CD8-positive, alpha-beta T cell (primary cell): ENCODE measurements at regions of chr19 and their contacts with region 1.

Region 1: DNA sequence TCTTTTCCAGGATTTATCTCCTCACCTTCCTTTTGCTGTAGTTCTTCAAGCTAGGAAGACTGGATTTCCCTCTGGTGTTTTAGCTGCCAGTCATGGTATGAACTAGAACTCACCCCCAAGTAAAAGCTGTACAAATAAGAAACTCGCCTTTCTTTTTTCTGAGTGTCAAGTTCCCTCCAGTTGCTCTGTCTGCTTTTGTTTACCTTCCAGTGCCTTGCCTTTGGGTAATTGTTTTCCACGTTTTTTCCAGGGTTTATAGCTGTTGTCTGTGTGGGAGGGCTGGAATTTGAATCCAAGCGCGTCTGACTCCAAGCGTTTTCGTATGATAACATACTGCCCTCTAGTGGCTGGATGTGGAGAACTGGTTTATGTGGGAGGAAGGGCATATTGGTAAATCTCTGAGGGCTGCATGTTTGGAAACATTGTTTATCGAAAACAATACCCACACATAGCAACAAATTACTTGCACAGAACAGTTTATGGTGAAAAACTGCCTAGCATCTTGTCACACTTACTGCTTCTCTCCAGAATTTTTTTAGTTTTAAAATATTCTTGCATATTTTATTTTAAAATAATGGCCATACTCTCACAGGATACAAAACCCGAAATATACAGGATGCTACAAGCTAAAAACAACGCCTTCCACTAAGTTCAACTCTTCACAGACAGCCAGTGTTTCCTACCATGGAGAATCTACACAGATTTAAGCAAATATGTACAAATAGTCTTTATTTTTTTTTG is 19.2 kb downstream of the RCN3 start:
- DNase-seq: peak in 7 of 9 experiments; percentile 51 to 89 (median 70)
- ATAC-seq: peak; percentile 78
- H3K4me3 ChIP-seq: peak overlapping the region; percentile 3 to 41
- H3K4me3 Mint-ChIP-seq: peak overlapping the region; percentile 79
- H3K27ac ChIP-seq: no peak overlapping the region
- H3K27ac Mint-ChIP-seq: peak overlapping the region; percentile 82
- H3K4me1 ChIP-seq: peaks cover 49% of the 10 kb centered on the region
- H3K4me1 Mint-ChIP-seq: peaks cover 40% of the 10 kb centered on the region
- H3K27me3 ChIP-seq: no peaks in the 10 kb centered on the region
- H3K27me3 Mint-ChIP-seq: no peaks in the 10 kb centered on the region
- CTCF ChIP-seq: peak; percentile 89

Region 2: DNA sequence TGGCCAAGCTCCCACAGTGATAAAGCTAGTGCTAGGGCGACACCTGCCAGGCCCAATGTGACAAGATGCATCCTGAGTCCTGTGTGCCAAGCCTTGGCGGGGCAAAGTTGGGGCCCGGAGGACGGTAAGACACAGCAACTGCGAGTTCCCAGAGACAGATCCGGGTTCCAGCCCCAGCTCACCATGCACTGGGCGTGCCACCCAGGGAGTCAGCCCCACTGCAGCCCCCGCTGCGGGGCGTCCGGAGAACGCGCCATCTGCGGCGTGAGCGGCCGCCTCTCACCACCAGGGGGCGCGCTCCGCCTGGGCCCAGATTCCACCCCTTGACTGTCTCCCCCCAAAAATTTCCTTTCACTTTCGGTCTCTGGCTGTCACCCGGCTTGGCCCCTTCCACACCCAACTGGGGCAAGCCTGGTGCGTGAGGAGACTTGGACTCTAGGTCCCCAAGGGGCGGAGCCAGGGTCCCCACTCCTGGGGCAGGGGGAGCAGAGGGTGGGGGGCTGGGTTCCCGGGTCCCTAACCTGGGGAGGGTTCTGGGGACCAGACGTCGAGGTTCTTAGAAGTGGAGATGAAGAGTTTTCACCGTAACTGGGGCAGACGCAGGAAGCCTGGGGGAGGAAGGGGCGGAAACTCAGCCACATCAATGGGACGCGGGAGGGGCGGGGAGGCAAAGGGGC is 73.0 kb before region 1 on chr19 and contains the start of gene FLT3LG:
- CTCF ChIA-PET with region 1: interaction called, 15 read pairs
- POLR2A ChIA-PET with region 1: no interaction called
- intact Hi-C with region 1: loop called (anchors 1 kb)
- DNase-seq: peak; percentile 83 to 97 (median 91)
- ATAC-seq: peak; percentile 58
- H3K4me3 ChIP-seq: peak within 1 kb of the TSS; percentile 88 to 98
- H3K4me3 Mint-ChIP-seq: peak within 1 kb of the TSS; percentile 91
- H3K27ac ChIP-seq: peak within 1 kb of the TSS; percentile 92 to 96
- H3K27ac Mint-ChIP-seq: peak within 1 kb of the TSS; percentile 98
- H3K4me1 ChIP-seq: peaks cover 53% of the 10 kb centered on the region
- H3K4me1 Mint-ChIP-seq: peaks cover 54% of the 10 kb centered on the region
- H3K27me3 ChIP-seq: no peaks in the 10 kb centered on the region
- H3K27me3 Mint-ChIP-seq: no peaks in the 10 kb centered on the region
- CTCF ChIP-seq: peak; percentile 83
- total RNA-seq, gene FLT3LG: 246 to 259 TPM

Region 3: DNA sequence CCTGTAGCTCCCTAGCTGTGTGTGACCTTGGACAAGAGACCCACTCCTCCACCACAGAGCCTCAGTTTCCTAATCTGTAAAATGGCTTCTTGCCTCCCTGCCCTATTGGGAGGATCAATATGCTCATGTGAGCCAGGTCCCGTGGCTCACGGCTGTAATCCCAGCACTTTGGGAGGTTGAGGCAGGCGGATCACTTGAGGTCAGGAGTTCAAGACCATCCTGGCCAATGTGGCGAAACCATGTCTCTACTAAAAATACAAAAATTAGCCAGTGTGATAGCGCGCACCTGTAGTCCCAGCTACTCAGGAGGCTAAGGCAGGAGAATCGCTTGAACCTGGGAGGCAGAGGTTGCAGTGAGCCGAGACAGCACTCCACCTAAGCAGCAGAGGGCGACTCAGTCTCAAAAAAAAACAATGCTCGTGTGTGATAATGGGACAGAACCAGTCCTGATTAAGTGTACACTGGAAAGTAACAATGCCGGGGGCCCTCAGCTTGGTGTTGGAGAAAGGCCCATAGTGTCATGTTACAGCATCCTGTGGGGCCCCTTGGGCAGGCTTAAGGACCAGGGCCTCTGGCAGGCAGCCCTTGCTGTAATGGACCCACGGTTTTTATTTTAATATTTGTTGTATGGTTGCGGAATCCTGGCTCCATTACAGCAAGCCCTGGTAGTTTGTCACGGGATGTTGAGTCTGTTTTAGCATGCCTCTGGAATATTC is 44.0 kb before region 1 on chr19:
- CTCF ChIA-PET with region 1: interaction called, 3 read pairs
- POLR2A ChIA-PET with region 1: interaction called, 11 read pairs
- intact Hi-C with region 1: loop called (anchors 1 kb)
- DNase-seq: peak in 6 of 9 experiments; percentile 43 to 80 (median 58)
- ATAC-seq: no peak
- H3K4me3 ChIP-seq: no peak overlapping the region
- H3K4me3 Mint-ChIP-seq: no peak overlapping the region
- H3K27ac ChIP-seq: peak overlapping the region in 1 of 2 experiments; percentile 98
- H3K27ac Mint-ChIP-seq: peak overlapping the region; percentile 75
- H3K4me1 ChIP-seq: peaks cover 42% of the 10 kb centered on the region
- H3K4me1 Mint-ChIP-seq: peaks cover 40% of the 10 kb centered on the region
- H3K27me3 ChIP-seq: no peaks in the 10 kb centered on the region
- H3K27me3 Mint-ChIP-seq: no peaks in the 10 kb centered on the region
- CTCF ChIP-seq: peak; percentile 67

Region 4: GRCh38 chr19:49512970-49513745 is 33.8 kb before region 1 on chr19:
- CTCF ChIA-PET with region 1: interaction called, 24 read pairs
- POLR2A ChIA-PET with region 1: no interaction called
- intact Hi-C with region 1: no loop called
- DNase-seq: peak in 2 of 9 experiments; percentile 48 to 56
- ATAC-seq: peak; percentile 72
- H3K4me3 ChIP-seq: peak overlapping the region; percentile 61 to 66
- H3K4me3 Mint-ChIP-seq: peak overlapping the region; percentile 84
- H3K27ac ChIP-seq: peak overlapping the region; percentile 32 to 33
- H3K27ac Mint-ChIP-seq: peak overlapping the region; percentile 71
- H3K4me1 ChIP-seq: peaks cover 24% of the 10 kb centered on the region
- H3K4me1 Mint-ChIP-seq: peaks cover 32% of the 10 kb centered on the region
- H3K27me3 ChIP-seq: no peaks in the 10 kb centered on the region
- H3K27me3 Mint-ChIP-seq: no peaks in the 10 kb centered on the region
- CTCF ChIP-seq: no peak

Region 5: DNA sequence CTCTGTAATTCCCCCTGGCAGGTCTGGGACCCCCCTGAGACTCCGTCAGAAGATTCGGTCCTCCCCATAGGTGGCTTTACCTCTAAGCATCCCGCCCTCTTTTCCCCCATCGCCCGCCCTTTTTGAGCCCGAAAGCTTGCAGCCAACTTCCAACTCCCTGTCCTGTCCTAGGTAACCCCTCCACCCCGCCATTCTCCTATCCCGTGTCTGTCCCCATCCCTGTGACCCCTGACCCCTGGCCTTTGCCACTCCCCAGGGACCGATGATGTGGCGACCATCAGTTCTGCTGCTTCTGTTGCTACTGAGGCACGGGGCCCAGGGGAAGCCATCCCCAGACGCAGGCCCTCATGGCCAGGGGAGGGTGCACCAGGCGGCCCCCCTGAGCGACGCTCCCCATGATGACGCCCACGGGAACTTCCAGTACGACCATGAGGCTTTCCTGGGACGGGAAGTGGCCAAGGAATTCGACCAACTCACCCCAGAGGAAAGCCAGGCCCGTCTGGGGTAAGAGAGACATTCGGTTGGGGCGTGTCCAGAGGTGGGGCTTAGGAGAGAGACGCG is 18.7 kb before region 1 on chr19:
- CTCF ChIA-PET with region 1: interaction called, 38 read pairs
- POLR2A ChIA-PET with region 1: interaction called, 8 read pairs
- intact Hi-C with region 1: no loop called
- DNase-seq: no peak
- ATAC-seq: no peak
- H3K4me3 ChIP-seq: peak overlapping the region; percentile 40 to 62
- H3K4me3 Mint-ChIP-seq: peak overlapping the region; percentile 80
- H3K27ac ChIP-seq: no peak overlapping the region
- H3K27ac Mint-ChIP-seq: no peak overlapping the region
- H3K4me1 ChIP-seq: peaks cover 18% of the 10 kb centered on the region
- H3K4me1 Mint-ChIP-seq: peaks cover 20% of the 10 kb centered on the region
- H3K27me3 ChIP-seq: no peaks in the 10 kb centered on the region
- H3K27me3 Mint-ChIP-seq: no peaks in the 10 kb centered on the region
- CTCF ChIP-seq: no peak

Region 6: GRCh38 chr19:49533551-49534488 is 13.2 kb before region 1 on chr19:
- CTCF ChIA-PET with region 1: interaction called, 38 read pairs
- POLR2A ChIA-PET with region 1: interaction called, 5 read pairs
- intact Hi-C with region 1: no loop called
- DNase-seq: peak; percentile 72 to 92 (median 86)
- ATAC-seq: peak; percentile 91
- H3K4me3 ChIP-seq: peak overlapping the region; percentile 71 to 78
- H3K4me3 Mint-ChIP-seq: peak overlapping the region; percentile 84
- H3K27ac ChIP-seq: peak overlapping the region in 1 of 2 experiments; percentile 36
- H3K27ac Mint-ChIP-seq: peak overlapping the region; percentile 55
- H3K4me1 ChIP-seq: peaks cover 21% of the 10 kb centered on the region
- H3K4me1 Mint-ChIP-seq: peaks cover 23% of the 10 kb centered on the region
- H3K27me3 ChIP-seq: peaks cover 0 to 3% of the 10 kb centered on the region in 2 experiments
- H3K27me3 Mint-ChIP-seq: no peaks in the 10 kb centered on the region
- CTCF ChIP-seq: no peak

Region 7: GRCh38 chr19:49580264-49581006 is 33.4 kb after region 1 on chr19 and contains the start of gene NOSIP:
- CTCF ChIA-PET with region 1: interaction called, 601 read pairs
- POLR2A ChIA-PET with region 1: interaction called, 6 read pairs
- intact Hi-C with region 1: no loop called
- DNase-seq: peak; percentile 93 to 98 (median 97)
- ATAC-seq: peak; percentile 97
- H3K4me3 ChIP-seq: peak within 1 kb of the TSS; percentile 68 to 71
- H3K4me3 Mint-ChIP-seq: peak within 1 kb of the TSS; percentile 95
- H3K27ac ChIP-seq: peak within 1 kb of the TSS; percentile 63 to 66
- H3K27ac Mint-ChIP-seq: peak within 1 kb of the TSS; percentile 94
- H3K4me1 ChIP-seq: peaks cover 22% of the 10 kb centered on the region
- H3K4me1 Mint-ChIP-seq: peaks cover 39% of the 10 kb centered on the region
- H3K27me3 ChIP-seq: no peaks in the 10 kb centered on the region
- H3K27me3 Mint-ChIP-seq: no peaks in the 10 kb centered on the region
- CTCF ChIP-seq: no peak
- total RNA-seq, gene NOSIP: 103 to 110 TPM